Astrocyte of the cerebellum (primary cell): ENCODE measurements at regions of chr11 and their contacts with region 1.

Region 1: GRCh38 chr11:7204778-7205177 is 46.9 kb upstream of the SYT9 start:
- DNase-seq: peak; percentile 42
- H3K4me3 ChIP-seq: no peak overlapping the region
- CTCF ChIP-seq: no peak

Region 2: DNA sequence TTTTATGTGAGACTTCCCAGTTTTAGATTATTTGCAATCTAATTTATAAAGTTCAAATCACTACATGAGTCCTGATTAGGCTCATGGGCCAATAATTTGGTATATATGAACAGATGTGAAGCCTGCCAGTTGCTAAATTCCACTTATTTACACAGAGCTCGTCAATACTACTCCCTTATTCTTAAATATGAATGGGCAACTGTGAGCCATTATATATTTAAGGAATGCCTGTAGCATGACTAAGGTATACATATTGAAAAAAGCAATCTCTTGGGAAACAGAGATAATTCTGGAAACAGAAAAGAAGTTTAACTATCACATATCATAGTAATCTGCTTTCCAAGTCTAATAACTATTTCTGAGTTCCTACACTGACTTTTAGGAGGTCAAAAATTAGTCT is 89.0 kb before region 1 on chr11:
- in situ Hi-C with region 1: loop called (anchors 5 kb)
- DNase-seq: no peak
- H3K4me3 ChIP-seq: no peak overlapping the region
- CTCF ChIP-seq: no peak